ENCODE measurements at regions of chr11 and their contacts with region 1.

Region 1: DNA sequence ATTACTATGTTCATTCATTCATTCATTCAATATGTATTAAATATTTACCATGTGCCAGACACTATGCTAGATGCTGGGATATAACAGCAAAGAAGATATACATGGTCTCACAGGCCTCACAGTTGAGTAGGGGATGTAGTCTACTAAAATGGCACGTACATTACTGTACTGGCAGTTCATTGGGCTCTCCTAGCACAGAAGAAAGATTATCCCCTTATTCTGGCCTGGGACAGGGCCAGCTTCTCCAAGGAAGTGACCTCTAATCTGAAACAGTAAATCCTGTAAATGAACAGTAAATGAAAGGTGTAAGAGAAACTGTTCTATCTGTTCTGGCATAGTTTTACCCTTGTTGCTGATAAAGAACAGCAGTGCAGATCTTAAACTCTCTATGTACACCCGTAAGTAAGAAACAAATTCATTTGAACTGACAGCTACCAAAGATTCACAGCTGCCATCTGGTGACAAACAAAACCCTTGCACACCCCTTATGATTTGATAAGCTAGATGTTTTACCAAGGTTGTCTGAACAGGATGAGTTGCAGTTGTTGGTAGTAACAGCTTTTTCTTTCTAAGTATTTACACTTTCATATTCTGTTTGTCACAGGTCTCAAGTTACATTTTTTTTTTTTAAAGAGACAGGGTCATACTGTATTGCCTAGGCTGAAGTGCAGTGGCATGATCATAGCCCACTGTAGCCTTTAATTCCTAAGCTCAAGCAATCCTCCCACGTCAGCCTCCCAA is 263.1 kb downstream of the TMEM135 start:
- DNase-seq: no peak

Region 2: GRCh38 chr11:86938900-86939880 is 361.6 kb before region 1 on chr11:
- in situ Hi-C with region 1: loop called (anchors 25 kb)
- DNase-seq: peak; percentile 51